Gastrocnemius medialis (tissue), 4 donors: ENCODE measurements at regions of chr2 and their contacts with region 1.

Region 1: DNA sequence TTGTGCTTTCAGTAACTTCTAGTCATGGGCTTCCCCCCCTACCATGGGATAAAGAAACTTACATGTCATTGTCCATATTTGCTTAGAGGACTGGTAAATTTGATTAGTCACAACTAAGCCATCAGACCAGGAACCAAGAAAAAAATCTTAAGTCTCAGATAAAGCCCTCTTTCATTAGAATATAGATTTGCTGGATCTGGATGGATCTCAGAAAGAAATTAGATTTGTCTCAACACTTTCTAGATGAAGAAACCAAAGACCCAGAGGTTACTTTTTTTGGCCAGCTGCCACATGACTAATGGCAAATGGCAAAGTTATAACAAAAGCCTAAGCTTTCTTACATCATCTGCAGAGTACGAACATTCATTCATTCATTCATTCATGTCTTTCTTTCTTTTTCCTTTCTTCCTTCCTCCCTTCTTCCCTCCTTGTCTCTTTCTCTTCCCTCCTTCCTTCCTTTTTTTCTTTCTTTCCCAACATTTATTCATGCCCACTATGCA is 60.2 kb downstream of the CDCA7 start:
- DNase-seq: no peak
- ATAC-seq: no peak
- H3K4me3 ChIP-seq: no peak overlapping the region
- H3K27ac ChIP-seq: no peak overlapping the region
- H3K4me1 ChIP-seq: peaks cover 19 to 23% of the 10 kb centered on the region in 2 donors
- H3K27me3 ChIP-seq: no peaks in the 10 kb centered on the region
- CTCF ChIP-seq: no peak
- POLR2A ChIP-seq: no peak

Region 2: DNA sequence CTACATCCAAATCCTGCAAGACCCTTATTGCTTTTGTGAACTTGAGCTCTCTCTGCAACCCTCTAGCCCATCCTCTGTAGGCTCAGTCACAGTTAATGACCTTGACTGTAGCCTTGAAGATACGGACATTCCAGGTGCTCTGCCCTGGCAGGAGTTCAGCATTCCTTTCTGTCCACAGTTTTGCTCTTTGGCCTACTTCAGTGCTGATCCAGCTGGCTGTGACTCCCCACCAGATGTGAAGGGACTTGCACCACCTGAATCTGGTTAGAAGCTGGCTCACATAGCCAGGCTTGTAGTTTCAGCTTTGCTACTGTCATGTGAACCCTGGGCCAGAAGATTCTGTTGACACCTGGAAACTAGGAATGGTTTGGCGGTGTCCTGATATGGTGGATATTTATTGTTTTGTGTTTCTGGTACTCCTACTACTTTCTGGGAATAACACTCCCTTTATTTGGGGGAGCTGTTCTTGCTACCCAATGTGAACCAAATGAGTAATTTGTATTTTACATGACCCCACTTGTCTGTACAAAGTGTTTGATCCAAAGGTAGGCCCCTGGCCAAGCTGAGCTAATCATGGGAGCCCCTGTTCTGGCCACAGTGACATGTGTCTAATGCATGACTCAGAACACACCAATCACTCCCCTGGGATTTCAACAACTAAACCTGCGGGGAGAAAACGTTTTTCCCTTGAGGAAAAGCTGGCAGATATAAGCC is 13.2 kb after region 1 on chr2:
- in situ Hi-C with region 1: no loop called
- intact Hi-C with region 1: loop called (anchors 1 kb)
- DNase-seq: peak; percentile 43 to 50
- ATAC-seq: peak; percentile 68 to 88
- H3K4me3 ChIP-seq: no peak overlapping the region
- H3K27ac ChIP-seq: peak overlapping the region in 2 of 4 donors; percentile 41 to 53
- H3K4me1 ChIP-seq: peaks cover 6 to 9% of the 10 kb centered on the region in 2 donors
- H3K27me3 ChIP-seq: no peaks in the 10 kb centered on the region
- CTCF ChIP-seq: no peak
- POLR2A ChIP-seq: no peak

Region 3: DNA sequence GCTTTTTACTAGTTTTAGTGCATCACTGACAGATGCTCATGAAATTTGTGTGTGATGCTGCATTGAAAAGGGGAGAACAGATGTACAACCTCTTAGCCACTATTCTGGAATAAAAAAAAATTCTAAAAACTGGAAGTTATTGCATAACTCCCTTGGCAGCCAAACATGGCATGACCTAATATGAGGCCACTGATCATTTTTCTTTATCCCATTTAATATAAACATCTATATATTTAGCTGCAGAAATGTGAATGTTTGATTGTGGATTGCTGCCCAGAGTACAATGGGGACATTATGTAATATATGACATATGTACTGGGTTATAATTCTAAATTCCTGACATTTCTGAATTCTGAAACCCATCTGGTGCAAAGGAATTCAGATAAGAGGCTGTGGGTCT is 26.3 kb after region 1 on chr2:
- in situ Hi-C with region 1: no loop called
- intact Hi-C with region 1: no loop called
- DNase-seq: no peak
- ATAC-seq: no peak
- H3K4me3 ChIP-seq: no peak overlapping the region
- H3K27ac ChIP-seq: no peak overlapping the region
- H3K4me1 ChIP-seq: no peaks in the 10 kb centered on the region
- H3K27me3 ChIP-seq: no peaks in the 10 kb centered on the region
- CTCF ChIP-seq: no peak
- POLR2A ChIP-seq: no peak